ENCODE measurements at regions of chr12 and their contacts with region 1.

Region 1: GRCh38 chr12:57528148-57528547 is 5.5 kb downstream of the MBD6 start:
- DNase-seq: no peak
- H3K4me3 ChIP-seq: no peak overlapping the region
- H3K27ac ChIP-seq: no peak overlapping the region
- H3K4me1 ChIP-seq: peaks cover 10% of the 10 kb centered on the region; the same call in 1 of the 2 replicates
- H3K27me3 ChIP-seq: no peaks in the 10 kb centered on the region
- CTCF ChIP-seq: no peak

Region 2: GRCh38 chr12:57224973-57225679 is 303.0 kb before region 1 on chr12:
- CTCF ChIA-PET with region 1: no interaction called
- POLR2A ChIA-PET with region 1: no interaction called
- intact Hi-C with region 1: no loop called
- DNase-seq: no peak
- H3K4me3 ChIP-seq: no peak overlapping the region
- H3K27ac ChIP-seq: no peak overlapping the region
- H3K4me1 ChIP-seq: peaks cover 19% of the 10 kb centered on the region
- H3K27me3 ChIP-seq: no peaks in the 10 kb centered on the region
- CTCF ChIP-seq: no peak

Region 3: GRCh38 chr12:57498132-57498502 is 30.0 kb before region 1 on chr12:
- CTCF ChIA-PET with region 1: no interaction called
- POLR2A ChIA-PET with region 1: no interaction called
- intact Hi-C with region 1: no loop called
- DNase-seq: no peak
- H3K4me3 ChIP-seq: no peak overlapping the region
- H3K27ac ChIP-seq: no peak overlapping the region
- H3K4me1 ChIP-seq: no peaks in the 10 kb centered on the region
- H3K27me3 ChIP-seq: no peaks in the 10 kb centered on the region
- CTCF ChIP-seq: no peak

Region 4: GRCh38 chr12:57516617-57517153 is 11.5 kb before region 1 on chr12:
- CTCF ChIA-PET with region 1: no interaction called
- POLR2A ChIA-PET with region 1: interaction called, 12 read pairs
- intact Hi-C with region 1: no loop called
- DNase-seq: no peak
- H3K4me3 ChIP-seq: no peak overlapping the region
- H3K27ac ChIP-seq: peak overlapping the region; percentile 28
- H3K4me1 ChIP-seq: peaks cover 20% of the 10 kb centered on the region
- H3K27me3 ChIP-seq: no peaks in the 10 kb centered on the region
- CTCF ChIP-seq: no peak

Region 5: GRCh38 chr12:57603324-57603723 is 75.2 kb after region 1 on chr12:
- CTCF ChIA-PET with region 1: no interaction called
- POLR2A ChIA-PET with region 1: no interaction called
- intact Hi-C with region 1: no loop called
- DNase-seq: no peak
- H3K4me3 ChIP-seq: no peak overlapping the region
- H3K27ac ChIP-seq: no peak overlapping the region
- H3K4me1 ChIP-seq: no peaks in the 10 kb centered on the region
- H3K27me3 ChIP-seq: peaks cover 22% of the 10 kb centered on the region
- CTCF ChIP-seq: no peak

Region 6: DNA sequence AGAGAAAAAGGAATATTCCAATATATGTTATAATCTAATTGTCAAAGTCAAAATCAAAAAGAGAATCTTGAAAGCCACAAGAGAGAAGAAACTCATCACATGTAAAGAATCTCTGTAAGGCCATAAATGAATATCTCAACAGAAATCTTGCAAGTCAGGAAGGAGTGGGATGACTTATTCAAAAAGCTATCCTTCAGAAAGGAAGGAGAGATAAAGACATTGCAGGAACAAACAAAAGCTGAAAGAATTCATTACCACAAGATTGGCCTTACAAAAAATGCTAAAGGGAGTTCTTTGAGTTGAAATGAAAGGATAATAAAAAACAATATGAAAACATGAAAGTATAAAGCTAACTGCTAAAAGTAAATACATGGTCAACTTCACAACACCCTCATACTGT is 1105.3 kb after region 1 on chr12:
- CTCF ChIA-PET with region 1: no interaction called
- POLR2A ChIA-PET with region 1: no interaction called
- intact Hi-C with region 1: no loop called
- DNase-seq: no peak
- H3K4me3 ChIP-seq: no peak overlapping the region
- H3K27ac ChIP-seq: no peak overlapping the region
- H3K4me1 ChIP-seq: no peaks in the 10 kb centered on the region
- H3K27me3 ChIP-seq: no peaks in the 10 kb centered on the region
- CTCF ChIP-seq: no peak